Pancreas (tissue), 10 donors: ENCODE measurements at regions of chr5 and their contacts with region 1.

Region 1: DNA sequence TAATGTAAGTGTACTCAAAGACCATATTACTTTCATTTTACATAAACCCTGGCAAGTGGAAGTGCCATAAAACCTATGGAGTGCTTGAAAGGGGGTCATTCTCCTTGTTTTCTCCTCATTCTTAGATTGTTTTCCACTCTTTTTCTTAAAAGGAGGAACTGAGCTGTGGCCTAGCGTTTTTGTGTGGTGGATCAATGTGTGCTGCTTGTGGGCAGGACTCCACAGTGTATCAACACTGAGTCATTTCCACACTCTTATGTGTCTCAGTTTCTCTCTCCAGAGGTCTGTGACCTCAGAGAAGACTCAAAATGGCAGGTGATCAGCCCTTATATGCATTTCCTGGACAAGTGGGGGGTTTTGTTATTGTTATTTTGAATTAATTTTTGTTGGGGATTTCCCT is 516.1 kb upstream of the CDH10 start:
- DNase-seq: no peak
- ATAC-seq: no peak
- H3K4me3 ChIP-seq: no peak overlapping the region
- H3K27ac ChIP-seq: no peak overlapping the region
- H3K4me1 ChIP-seq: no peaks in the 10 kb centered on the region
- H3K27me3 ChIP-seq: no peaks in the 10 kb centered on the region
- CTCF ChIP-seq: no peak

Region 2: GRCh38 chr5:25190521-25191000 is 29.7 kb after region 1 on chr5:
- intact Hi-C with region 1: loop called in 1 of 3 experiments (anchors 5 kb)
- DNase-seq: peak in 3 of 6 donors; percentile 7 to 60 (median 45)
- ATAC-seq: peak in 1 of 4 donors; percentile 80
- H3K4me3 ChIP-seq: peak overlapping the region in 1 of 4 donors; percentile 24
- H3K27ac ChIP-seq: no peak overlapping the region
- H3K4me1 ChIP-seq: no peaks in the 10 kb centered on the region
- H3K27me3 ChIP-seq: no peaks in the 10 kb centered on the region
- CTCF ChIP-seq: no peak

Region 3: GRCh38 chr5:25224316-25224982 is 63.6 kb after region 1 on chr5:
- intact Hi-C with region 1: no loop called
- DNase-seq: no peak
- ATAC-seq: no peak
- H3K4me3 ChIP-seq: no peak overlapping the region
- H3K27ac ChIP-seq: no peak overlapping the region
- H3K4me1 ChIP-seq: no peaks in the 10 kb centered on the region
- H3K27me3 ChIP-seq: no peaks in the 10 kb centered on the region
- CTCF ChIP-seq: no peak

Region 4: DNA sequence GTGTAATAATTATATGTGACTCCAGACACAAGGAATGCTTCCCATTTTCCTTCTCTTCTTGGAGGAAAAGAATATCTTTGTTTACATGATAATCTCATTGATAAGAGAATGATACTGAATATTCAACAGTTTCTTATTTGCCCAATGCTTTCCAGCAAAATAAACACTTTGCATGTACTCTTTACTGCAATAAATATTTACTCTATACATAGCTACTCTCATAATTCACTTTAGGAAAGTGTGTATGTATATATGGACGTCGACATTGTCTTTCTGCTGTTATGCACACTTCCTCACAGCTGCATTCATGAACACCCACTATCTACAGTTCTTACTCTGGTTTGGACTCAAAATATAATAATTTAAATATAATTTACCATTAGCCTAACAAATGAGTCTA is 101.3 kb after region 1 on chr5:
- intact Hi-C with region 1: no loop called
- DNase-seq: no peak
- ATAC-seq: no peak
- H3K4me3 ChIP-seq: no peak overlapping the region
- H3K27ac ChIP-seq: no peak overlapping the region
- H3K4me1 ChIP-seq: no peaks in the 10 kb centered on the region
- H3K27me3 ChIP-seq: no peaks in the 10 kb centered on the region
- CTCF ChIP-seq: no peak

Region 5: DNA sequence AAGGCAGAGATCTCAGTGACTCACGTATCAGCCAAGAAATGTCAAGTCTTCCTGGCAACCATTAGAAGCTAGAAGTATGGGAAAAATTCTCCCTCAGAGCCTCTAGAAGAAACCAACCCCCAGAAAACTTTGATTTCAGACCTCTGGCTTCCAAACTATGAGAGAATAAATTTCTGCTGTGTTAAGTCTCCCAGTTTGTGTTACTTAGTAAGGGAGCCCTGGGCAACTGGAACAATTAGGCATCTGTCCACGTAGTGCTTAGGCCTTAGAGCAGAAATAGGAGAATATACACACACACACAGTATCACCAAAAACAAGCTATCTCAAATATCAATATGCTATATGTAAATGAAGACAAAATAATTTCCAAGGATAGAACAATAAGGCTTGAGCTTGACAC is 378.6 kb after region 1 on chr5:
- intact Hi-C with region 1: no loop called
- DNase-seq: no peak
- ATAC-seq: no peak
- H3K4me3 ChIP-seq: no peak overlapping the region
- H3K27ac ChIP-seq: no peak overlapping the region
- H3K4me1 ChIP-seq: no peaks in the 10 kb centered on the region
- H3K27me3 ChIP-seq: no peaks in the 10 kb centered on the region
- CTCF ChIP-seq: no peak